Motor neuron (in vitro differentiated cells): ENCODE measurements at regions of chr3 and their contacts with region 1.

Region 1: GRCh38 chr3:58299839-58300516 is 6.1 kb upstream of the RPP14 start:
- ATAC-seq: peak in 5 of 8 experiments; percentile 27 to 32 (median 30)
- H3K4me3 ChIP-seq: no peak overlapping the region
- H3K27ac ChIP-seq: no peak overlapping the region
- H3K4me1 ChIP-seq: peaks cover 0 to 2% of the 10 kb centered on the region in 2 donors

Region 2: DNA sequence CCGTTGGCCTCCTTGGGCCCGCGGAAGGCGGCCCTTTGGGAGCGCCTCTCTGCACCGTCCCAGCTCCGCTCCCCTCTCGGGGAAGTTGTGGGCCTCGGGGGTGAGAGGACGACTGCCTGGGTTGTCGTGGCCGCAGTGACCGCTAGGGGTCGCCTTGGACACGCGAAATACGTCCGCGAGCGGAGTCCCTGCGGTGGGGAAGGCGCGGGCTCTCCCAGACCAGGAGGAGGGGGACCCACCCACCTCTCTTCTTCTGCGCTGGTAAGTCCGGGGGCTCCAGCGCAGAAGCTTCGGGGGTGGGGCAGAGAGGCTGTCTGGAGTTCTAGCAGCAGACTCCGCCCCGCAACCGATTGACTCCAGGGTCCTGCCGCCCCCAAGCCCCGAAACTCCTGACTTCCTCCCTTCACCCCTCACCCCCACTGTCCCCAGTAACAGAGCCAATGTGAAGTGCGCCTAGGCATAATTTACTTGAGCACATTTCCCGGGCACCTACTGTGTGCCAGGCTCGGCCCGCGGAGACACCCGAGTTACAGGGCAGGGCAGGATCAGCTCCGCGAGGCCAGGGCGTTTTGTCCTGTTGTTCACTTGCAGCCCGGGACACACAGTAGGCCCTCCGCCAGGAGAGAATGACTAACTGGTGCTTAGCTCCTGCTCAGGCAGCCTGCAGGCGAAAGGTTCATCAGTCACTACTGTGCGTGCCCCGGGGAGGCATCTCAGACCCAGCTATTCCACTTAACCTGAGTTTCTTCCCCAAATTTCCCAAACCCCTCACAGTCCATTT is 122.0 kb before region 1 on chr3:
- in situ Hi-C with region 1: loop called in 5 of 9 experiments (anchors 10 to 25 kb)
- ATAC-seq: peak; percentile 41 to 95 (median 86)
- H3K4me3 ChIP-seq: peak overlapping the region; percentile 24 to 39 (median 27)
- H3K27ac ChIP-seq: no peak overlapping the region
- H3K4me1 ChIP-seq: peaks cover 2 to 4% of the 10 kb centered on the region in 2 donors

Region 3: DNA sequence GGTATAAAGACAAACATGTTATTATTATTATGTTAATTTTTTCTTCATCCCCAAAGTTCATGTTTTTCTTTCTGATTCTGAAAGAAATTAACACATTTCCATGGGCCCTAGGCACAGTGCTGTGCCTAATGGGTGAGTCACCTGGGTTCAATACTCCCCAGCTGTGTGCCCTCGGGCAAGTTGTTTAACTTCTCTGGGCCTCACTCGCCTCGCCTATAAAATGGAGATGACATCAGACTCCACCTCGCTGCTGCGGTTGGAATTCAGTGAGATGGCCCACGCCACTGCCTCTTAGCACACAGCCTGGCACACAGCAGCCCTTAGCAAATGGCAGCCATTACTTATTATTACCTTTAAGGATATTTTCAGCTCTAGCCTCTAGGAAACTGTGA is 111.8 kb before region 1 on chr3:
- in situ Hi-C with region 1: loop called in 6 of 9 experiments (anchors 5 to 25 kb)
- ATAC-seq: peak in 3 of 8 experiments; percentile 67 to 84 (median 74)
- H3K4me3 ChIP-seq: no peak overlapping the region
- H3K27ac ChIP-seq: no peak overlapping the region
- H3K4me1 ChIP-seq: peaks cover 20 to 37% of the 10 kb centered on the region in 2 donors